ENCODE measurements at regions of chr4 and their contacts with region 1.

Region 1: DNA sequence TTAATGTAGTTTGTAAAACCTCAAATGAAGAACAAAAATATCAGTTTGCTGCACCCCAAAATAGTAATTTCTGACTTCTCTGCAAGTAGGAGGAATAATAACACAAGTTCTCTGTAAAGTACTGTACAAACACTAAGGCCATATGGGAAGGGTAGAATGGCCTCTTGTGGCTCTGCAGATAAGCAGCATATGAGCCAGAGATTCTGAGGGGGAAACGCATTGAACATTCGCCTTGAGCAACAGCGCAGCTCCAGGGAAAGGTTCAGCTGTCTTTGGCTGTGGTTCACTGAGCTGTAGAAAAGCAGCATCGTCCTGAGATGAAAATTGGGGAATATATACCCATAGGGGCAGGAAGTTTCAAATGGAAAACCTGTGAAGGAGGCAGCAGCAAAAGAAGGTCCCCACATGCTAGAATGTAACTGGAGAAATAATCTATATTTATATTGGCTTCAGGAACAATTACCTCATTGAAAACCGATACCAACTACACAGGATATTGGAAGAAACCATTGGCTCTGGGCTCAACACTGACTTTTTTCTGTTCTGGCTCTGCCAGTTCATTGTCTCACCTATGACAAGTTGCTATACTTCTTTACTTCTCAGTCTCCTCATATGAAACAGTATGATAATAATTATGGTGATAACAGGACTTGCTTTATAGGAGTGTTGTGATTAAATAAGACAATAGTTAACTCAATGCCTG is 357.6 kb upstream of the CPEB2 start:
- DNase-seq: no peak
- H3K4me3 ChIP-seq: no peak overlapping the region
- H3K27ac ChIP-seq: peak overlapping the region; percentile 100
- H3K4me1 ChIP-seq: peaks cover 50% of the 10 kb centered on the region
- H3K27me3 ChIP-seq: no peaks in the 10 kb centered on the region
- CTCF ChIP-seq: no peak

Region 2: DNA sequence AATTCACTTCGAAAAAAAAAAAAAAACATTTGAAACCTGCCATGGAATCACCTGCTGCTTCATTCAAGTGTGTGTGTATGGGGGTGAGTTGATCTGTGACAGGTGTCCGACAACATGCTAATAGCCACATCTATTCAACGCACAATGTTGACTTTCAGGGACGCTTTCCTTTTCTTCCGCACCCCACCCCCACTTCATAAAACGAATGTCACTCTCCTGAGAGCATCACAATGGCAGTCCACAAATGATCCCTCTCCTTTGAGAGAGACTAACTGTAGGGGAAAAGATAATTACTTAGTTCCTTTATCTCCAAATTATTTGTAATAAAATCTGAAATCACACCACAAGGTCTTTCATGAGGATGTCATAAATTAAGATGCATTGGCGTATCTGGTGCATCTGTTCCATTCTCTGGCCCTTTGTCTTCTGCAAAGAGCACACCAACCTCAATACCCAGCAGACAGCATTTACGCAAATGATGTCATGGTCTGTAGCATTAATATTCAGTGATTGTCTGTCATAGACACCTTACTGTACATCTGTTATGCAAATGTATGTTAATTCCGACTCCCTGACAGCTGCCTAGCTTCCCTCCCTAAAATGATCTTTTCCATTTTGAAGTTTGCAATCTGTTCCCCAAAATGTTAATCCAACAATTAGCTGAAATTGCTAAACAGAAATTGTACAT is 377.2 kb before region 1 on chr4:
- CTCF ChIA-PET with region 1: no interaction called
- POLR2A ChIA-PET with region 1: interaction called, 10 read pairs
- intact Hi-C with region 1: no loop called
- DNase-seq: no peak
- H3K4me3 ChIP-seq: no peak overlapping the region
- H3K27ac ChIP-seq: no peak overlapping the region
- H3K4me1 ChIP-seq: no peaks in the 10 kb centered on the region
- H3K27me3 ChIP-seq: no peaks in the 10 kb centered on the region
- CTCF ChIP-seq: no peak

Region 3: GRCh38 chr4:14559646-14560045 is 85.1 kb before region 1 on chr4:
- CTCF ChIA-PET with region 1: interaction called, 6 read pairs
- POLR2A ChIA-PET with region 1: no interaction called
- intact Hi-C with region 1: loop called (anchors 1 kb)
- DNase-seq: peak; percentile 93
- H3K4me3 ChIP-seq: no peak overlapping the region
- H3K27ac ChIP-seq: peak overlapping the region; percentile 92
- H3K4me1 ChIP-seq: peaks cover 42% of the 10 kb centered on the region
- H3K27me3 ChIP-seq: no peaks in the 10 kb centered on the region
- CTCF ChIP-seq: no peak

Region 4: DNA sequence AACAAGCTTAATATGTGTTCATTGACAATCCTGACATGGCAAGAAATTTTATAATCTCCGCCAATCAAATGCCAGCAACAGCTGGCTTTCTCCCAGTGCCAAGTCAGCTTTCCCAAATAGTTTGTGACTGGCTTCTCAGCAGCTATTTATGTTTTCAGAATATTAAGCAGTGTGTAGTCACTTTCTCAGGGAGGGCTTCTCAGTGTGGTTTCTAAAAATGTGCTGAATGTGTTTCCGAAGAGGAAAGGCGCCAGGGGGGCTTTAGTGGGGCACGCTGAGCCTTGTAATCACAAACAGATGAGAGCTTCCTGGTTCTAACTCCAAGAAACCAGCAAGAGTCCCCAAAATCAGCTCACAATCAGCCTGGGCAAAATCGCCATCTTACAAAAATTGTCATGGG is 98.9 kb after region 1 on chr4:
- CTCF ChIA-PET with region 1: interaction called, 8 read pairs
- POLR2A ChIA-PET with region 1: interaction called, 19 read pairs
- intact Hi-C with region 1: loop called (anchors 1 kb)
- DNase-seq: peak; percentile 98
- H3K4me3 ChIP-seq: no peak overlapping the region
- H3K27ac ChIP-seq: peak overlapping the region; percentile 99
- H3K4me1 ChIP-seq: peaks cover 44% of the 10 kb centered on the region
- H3K27me3 ChIP-seq: no peaks in the 10 kb centered on the region
- CTCF ChIP-seq: no peak

Region 5: GRCh38 chr4:15001869-15002658 is 357.3 kb after region 1 on chr4 and contains the start of gene CPEB2:
- CTCF ChIA-PET with region 1: no interaction called
- POLR2A ChIA-PET with region 1: interaction called, 8 read pairs
- intact Hi-C with region 1: loop called (anchors 1 kb)
- DNase-seq: peak; percentile 98
- H3K4me3 ChIP-seq: peak within 1 kb of the TSS; percentile 88
- H3K27ac ChIP-seq: peak within 1 kb of the TSS; percentile 100
- H3K4me1 ChIP-seq: peaks cover 17% of the 10 kb centered on the region
- H3K27me3 ChIP-seq: no peaks in the 10 kb centered on the region
- CTCF ChIP-seq: no peak
- total RNA-seq, gene CPEB2: 75.5 and 80.1 TPM in 2 replicates

Region 6: DNA sequence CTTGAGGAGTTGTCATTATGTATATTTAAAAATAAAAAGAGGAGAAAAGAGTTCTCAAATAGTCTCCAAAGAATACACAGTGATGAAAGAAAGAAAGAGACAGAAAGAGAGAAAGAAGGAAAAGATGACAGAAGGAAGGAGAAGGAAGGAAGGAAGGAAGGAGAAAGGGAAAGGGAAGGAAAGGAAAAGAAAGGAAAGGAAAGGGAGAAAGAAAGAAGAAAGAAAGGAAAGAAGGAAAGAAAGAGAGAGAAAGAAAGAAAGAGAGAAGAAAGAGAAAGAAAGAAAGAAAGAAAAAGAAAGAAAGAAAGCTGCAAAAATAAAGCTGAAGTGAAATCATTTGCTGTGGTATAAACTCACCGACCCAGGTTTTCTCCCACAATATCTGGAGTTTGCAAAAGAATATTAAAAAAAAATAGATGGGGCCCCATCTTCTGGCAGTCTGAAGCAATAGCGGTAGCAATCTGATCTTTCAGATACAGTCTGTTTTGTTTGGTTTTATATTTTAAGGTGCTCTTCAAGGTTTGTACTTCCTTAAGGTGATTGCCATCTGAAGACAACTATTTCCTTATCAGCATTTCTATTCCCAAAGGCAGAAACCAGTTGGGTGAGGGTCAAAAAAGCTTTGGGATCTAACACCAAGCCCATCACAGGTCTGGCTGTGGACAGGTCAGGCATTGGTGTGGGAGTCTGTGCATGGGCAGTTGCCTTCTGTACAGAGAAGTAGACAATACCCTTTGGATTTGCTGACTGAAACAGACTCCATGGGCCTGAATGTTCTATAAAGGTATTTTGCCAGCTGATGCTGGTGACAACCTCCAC is 517.9 kb after region 1 on chr4:
- CTCF ChIA-PET with region 1: interaction called, 5 read pairs
- POLR2A ChIA-PET with region 1: no interaction called
- intact Hi-C with region 1: loop called (anchors 5 kb)
- DNase-seq: peak; percentile 67
- H3K4me3 ChIP-seq: no peak overlapping the region
- H3K27ac ChIP-seq: peak overlapping the region; percentile 52
- H3K4me1 ChIP-seq: peaks cover 17% of the 10 kb centered on the region
- H3K27me3 ChIP-seq: no peaks in the 10 kb centered on the region
- CTCF ChIP-seq: peak; percentile 70

Region 7: GRCh38 chr4:15457406-15458201 is 812.9 kb after region 1 on chr4:
- CTCF ChIA-PET with region 1: no interaction called
- POLR2A ChIA-PET with region 1: no interaction called
- intact Hi-C with region 1: loop called (anchors 5 kb)
- DNase-seq: peak; percentile 78
- H3K4me3 ChIP-seq: no peak overlapping the region
- H3K27ac ChIP-seq: no peak overlapping the region
- H3K4me1 ChIP-seq: peaks cover 32% of the 10 kb centered on the region
- H3K27me3 ChIP-seq: no peaks in the 10 kb centered on the region
- CTCF ChIP-seq: peak; percentile 79

Measured in A673 (cell line).